ENCODE measurements at regions of chr14 and their contacts with region 1.

Region 1: GRCh38 chr14:23301288-23301968 is 1.2 kb downstream of the PPP1R3E start:
- DNase-seq: peak; percentile 94 to 100 (median 96)

Region 2: GRCh38 chr14:23259426-23259825 is 42.0 kb before region 1 on chr14:
- intact Hi-C with region 1: loop called (anchors 2 kb)
- DNase-seq: no peak

Region 3: DNA sequence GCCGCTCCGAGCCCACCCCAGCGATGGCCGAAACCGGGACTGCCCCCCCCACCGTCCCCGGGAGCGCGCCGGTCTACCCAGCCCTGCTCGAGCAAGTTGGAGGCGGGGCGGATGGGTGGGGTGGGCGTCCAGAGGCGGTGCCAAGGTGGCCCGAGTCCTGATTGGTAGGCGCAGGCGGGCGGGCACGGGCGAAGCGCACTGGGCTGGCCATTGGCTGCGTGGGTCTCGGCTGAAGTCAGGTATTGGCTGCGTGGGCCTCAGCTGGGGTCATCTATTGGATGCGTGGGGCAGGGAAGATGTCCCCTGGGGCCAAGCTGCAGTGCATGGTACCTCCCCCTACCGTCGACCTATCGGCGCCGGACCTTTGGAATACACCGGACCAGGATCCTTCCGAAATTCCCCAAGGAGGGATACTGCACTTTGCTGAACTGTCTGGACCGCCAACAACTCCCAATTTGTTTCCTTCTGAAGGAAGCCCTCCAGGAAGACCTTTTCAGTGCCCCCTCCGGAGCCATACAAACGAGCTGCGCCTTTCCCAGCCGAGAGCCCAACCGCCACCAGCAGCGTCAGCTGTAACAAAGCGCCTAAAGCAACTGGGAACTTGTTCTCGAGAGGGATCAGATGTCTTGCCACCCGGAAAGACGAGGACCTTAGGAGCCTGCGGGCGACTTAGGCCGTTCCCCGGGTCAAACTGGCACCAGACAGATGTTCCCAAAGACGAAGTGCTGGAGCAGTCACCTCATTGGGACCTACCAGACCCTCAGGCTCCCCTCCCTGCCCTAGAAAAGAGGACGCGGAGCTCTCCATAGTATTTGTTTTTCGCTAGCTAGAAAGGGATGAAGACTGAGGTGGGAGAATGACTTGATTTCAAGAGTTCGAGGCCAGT is 15.2 kb before region 1 on chr14 and contains the start of gene HOMEZ:
- intact Hi-C with region 1: loop called (anchors 1 kb)
- DNase-seq: peak; percentile 99 to 100 (median 99)

Region 4: DNA sequence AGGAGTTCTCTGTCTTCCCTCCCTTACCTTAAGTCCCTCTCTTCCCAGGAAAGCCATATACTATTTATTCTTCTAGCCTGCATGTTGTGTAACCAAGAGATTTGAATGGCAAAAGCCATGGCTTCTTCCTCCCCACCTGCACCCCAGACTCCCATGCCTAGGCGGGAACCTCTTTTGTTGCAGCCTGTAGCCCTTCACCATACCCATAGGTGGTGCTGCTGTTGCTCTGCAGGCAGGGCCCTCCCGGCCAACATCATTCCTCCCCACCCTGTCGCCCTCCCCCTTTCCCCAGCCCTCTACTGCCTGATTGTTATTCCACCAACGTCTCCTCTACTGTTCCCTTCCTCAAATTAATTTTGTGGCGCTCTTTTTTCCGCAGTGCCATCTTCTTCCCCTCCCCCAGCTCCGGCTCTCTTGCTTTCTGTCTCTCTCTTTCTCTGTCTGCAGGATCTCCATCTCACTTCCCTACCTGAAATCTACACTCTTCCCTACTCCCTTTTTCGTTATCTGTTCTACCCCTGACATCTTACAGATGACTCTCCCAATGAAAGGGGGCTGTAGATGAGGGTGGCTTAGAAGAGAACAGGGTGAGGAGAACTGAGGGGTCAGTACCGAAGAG is 181.9 kb after region 1 on chr14:
- intact Hi-C with region 1: no loop called
- DNase-seq: peak; percentile 61 to 97 (median 81)